SK-N-SH (cell line): ENCODE measurements at regions of chr17 and their contacts with region 1.

Region 1: GRCh38 chr17:78107457-78107856 is 21.1 kb downstream of the TMC6 start:
- DNase-seq: no peak
- H3K4me3 ChIP-seq: no peak overlapping the region
- H3K27ac ChIP-seq: no peak overlapping the region
- H3K4me1 ChIP-seq: peaks cover 0 to 3% of the 10 kb centered on the region in 2 experiments; a peak in 1 of 4 replicates
- H3K27me3 ChIP-seq: no peaks in the 10 kb centered on the region
- CTCF ChIP-seq: no peak
- EP300 ChIP-seq: no peak
- RAD21 ChIP-seq: no peak

Region 2: GRCh38 chr17:78096093-78096492 is 11.4 kb before region 1 on chr17:
- CTCF ChIA-PET with region 1: interaction called, 40 read pairs
- POLR2A ChIA-PET with region 1: no interaction called
- DNase-seq: no peak
- H3K4me3 ChIP-seq: no peak overlapping the region
- H3K27ac ChIP-seq: no peak overlapping the region
- H3K4me1 ChIP-seq: peaks cover 0 to 3% of the 10 kb centered on the region in 2 experiments; a peak in 1 of 4 replicates
- H3K27me3 ChIP-seq: no peaks in the 10 kb centered on the region
- CTCF ChIP-seq: no peak
- EP300 ChIP-seq: no peak
- RAD21 ChIP-seq: no peak